Activated T-helper 1 cell treated with anti-CD3 and anti-CD28 coated beads, Interleukin-12 subunit alpha, Interleukin-12 subunit beta, Interleukin-2, Interleukin-4 antibody, amounts not matched to agents 30 ng/mL and 10 ng/mL and 1 ng/mL, durations not matched to agents 14 hours and 24 hours and 36 hours (primary cell): ENCODE measurements at regions of chr6 and their contacts with region 1.

Region 1: DNA sequence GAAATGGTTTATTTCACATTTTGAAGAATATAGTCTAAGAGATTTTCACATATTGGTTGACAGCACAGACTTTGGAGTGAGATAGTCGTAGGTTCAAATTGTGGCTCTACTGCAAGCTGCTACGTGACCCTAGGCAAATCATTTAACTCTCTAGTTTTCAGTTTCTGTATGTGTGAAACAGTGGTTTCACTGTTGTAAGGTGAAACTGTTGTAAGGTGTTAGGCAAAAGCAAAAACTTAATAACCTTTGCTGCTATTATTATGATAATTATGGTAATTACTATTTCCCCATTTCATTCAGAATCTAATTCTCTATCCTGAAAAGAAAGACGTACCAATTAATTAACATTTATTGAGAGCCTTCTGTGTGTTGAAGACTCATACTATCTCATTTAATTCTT is 144.2 kb downstream of the REV3L start:
- DNase-seq: no peak
- H3K4me3 Mint-ChIP-seq: no peak overlapping the region
- H3K27ac Mint-ChIP-seq: peak overlapping the region; percentile 15
- H3K4me1 Mint-ChIP-seq: peaks cover 12% of the 10 kb centered on the region
- H3K27me3 Mint-ChIP-seq: no peaks in the 10 kb centered on the region

Region 2: GRCh38 chr6:111301946-111302345 is 36.9 kb before region 1 on chr6:
- intact Hi-C with region 1: loop called (anchors 2 kb)
- DNase-seq: no peak
- H3K4me3 Mint-ChIP-seq: no peak overlapping the region
- H3K27ac Mint-ChIP-seq: no peak overlapping the region
- H3K4me1 Mint-ChIP-seq: no peaks in the 10 kb centered on the region
- H3K27me3 Mint-ChIP-seq: no peaks in the 10 kb centered on the region